Endothelial cell of umbilical vein (primary cell): ENCODE measurements at regions of chr1 and their contacts with region 1.

Region 1: DNA sequence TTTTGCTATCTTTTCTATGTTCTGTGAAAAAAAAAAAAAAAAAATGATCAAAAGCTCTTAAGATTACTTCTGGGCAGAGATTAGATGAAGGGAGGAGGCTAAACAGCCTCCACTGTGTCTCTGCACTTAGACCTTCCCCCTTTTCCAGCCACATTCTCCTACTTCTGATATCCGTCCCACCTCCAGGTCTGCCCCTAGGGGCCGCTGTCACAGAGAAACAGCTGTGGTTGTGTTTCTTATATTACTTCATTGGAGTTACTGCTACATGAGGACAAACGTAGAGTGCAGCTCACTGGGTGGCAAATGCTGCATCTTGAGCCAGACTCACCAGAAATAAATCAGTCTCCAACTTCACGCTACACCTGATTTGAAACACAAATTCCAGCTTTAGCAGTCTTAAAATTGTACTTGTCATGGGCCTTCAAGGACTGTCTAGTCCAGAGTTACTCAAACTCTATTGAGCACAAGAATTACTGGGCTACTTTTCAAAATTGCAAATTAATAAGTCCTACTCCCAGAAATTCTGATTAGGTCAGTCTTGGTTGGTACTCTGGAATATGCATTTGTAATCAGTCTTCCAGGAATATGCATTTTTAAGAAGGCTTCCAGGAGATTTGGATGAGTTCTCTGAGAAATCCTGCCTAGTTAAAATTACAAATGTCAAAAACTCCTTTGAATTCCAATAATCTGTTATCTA is 125.2 kb upstream of the PTBP2 start:
- DNase-seq: peak; percentile 31
- H3K4me3 ChIP-seq: no peak overlapping the region
- H3K27ac ChIP-seq: no peak overlapping the region
- H3K4me1 ChIP-seq: no peaks in the 10 kb centered on the region
- H3K27me3 ChIP-seq: no peaks in the 10 kb centered on the region
- CTCF ChIP-seq: peak; percentile 61 to 64
- POLR2A ChIP-seq: no peak

Region 2: GRCh38 chr1:96579636-96580035 is 16.7 kb before region 1 on chr1:
- CTCF ChIA-PET with region 1: interaction called, 14 read pairs
- POLR2A ChIA-PET with region 1: no interaction called
- dilution Hi-C with region 1: no loop called
- intact Hi-C with region 1: no loop called
- DNase-seq: no peak
- H3K4me3 ChIP-seq: no peak overlapping the region
- H3K27ac ChIP-seq: no peak overlapping the region
- H3K4me1 ChIP-seq: no peaks in the 10 kb centered on the region
- H3K27me3 ChIP-seq: peaks cover 3 to 7% of the 10 kb centered on the region in 2 experiments
- CTCF ChIP-seq: no peak
- POLR2A ChIP-seq: no peak